ENCODE measurements at regions of chr11 and their contacts with region 1.

Region 1: DNA sequence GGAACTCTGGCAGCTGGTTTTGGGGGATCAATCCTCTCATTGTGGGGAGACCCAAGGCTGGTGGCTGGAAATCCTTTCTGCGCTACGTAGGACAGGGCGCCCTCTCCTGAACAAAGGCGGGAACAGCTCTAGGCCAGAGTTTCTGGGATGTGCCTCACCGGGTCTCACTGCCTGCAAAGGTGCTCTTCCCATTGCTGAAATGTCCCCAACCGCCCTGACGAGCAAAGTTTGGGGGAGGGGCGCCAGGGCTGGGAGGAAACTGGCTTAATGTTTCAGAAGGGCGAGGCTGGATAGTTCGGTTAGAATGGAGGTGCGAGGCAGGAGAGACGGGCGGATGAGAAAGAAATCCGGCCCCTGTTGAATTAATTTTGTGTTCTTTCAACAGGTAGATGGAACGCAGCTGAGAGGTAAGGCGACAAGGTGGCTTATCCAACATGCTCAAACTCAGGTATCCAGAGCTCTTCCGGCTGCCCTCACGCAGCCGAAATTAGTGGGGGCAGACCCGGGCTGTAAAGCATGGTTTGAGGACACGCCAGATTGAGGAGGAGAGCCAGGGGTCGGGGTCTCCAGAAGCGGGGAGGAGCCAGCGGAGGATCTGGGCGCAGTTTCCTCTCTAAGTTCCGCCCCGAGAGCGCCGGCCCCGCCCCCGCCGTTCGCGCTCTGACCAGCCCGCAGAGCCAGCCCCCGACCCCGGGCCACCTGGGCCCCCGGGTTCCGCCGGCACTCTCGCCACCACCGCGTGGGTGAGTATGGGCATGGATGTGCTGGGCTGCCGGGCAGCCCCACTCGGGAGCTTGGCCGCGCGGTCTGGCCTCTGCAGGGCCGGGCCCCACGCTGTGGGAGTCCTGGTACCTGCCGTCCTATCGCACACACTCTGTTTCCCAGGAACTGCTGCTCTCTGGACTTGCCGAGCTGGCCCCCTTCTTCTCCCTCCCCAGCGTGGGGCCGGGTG is at the start of gene PGAP2:
- DNase-seq: peak; percentile 28 to 76 (median 60)
- ATAC-seq: peak; percentile 71
- H3K4me3 ChIP-seq: peak within 1 kb of the TSS; percentile 71 to 98
- H3K4me3 Mint-ChIP-seq: peak within 1 kb of the TSS; percentile 97
- H3K27ac ChIP-seq: peak within 1 kb of the TSS; percentile 49 to 62
- H3K27ac Mint-ChIP-seq: peak within 1 kb of the TSS; percentile 91
- H3K4me1 ChIP-seq: peaks cover 5% of the 10 kb centered on the region
- H3K4me1 Mint-ChIP-seq: peaks cover 15% of the 10 kb centered on the region
- H3K27me3 ChIP-seq: no peaks in the 10 kb centered on the region
- H3K27me3 Mint-ChIP-seq: no peaks in the 10 kb centered on the region
- CTCF ChIP-seq: peak; percentile 59
- total RNA-seq, gene PGAP2: 16.3 to 18.5 TPM

Region 2: GRCh38 chr11:3642071-3642951 is 165.9 kb before region 1 on chr11:
- CTCF ChIA-PET with region 1: no interaction called
- POLR2A ChIA-PET with region 1: no interaction called
- intact Hi-C with region 1: no loop called
- DNase-seq: peak; percentile 32 to 81 (median 59)
- ATAC-seq: peak; percentile 89
- H3K4me3 ChIP-seq: peak overlapping the region; percentile 31 to 57
- H3K4me3 Mint-ChIP-seq: peak overlapping the region; percentile 71
- H3K27ac ChIP-seq: no peak overlapping the region
- H3K27ac Mint-ChIP-seq: no peak overlapping the region
- H3K4me1 ChIP-seq: peaks cover 10% of the 10 kb centered on the region
- H3K4me1 Mint-ChIP-seq: peaks cover 8% of the 10 kb centered on the region
- H3K27me3 ChIP-seq: peaks cover 2 to 3% of the 10 kb centered on the region in 2 experiments
- H3K27me3 Mint-ChIP-seq: peaks cover 53% of the 10 kb centered on the region
- CTCF ChIP-seq: no peak

Region 3: GRCh38 chr11:3709977-3710376 is 98.2 kb before region 1 on chr11:
- CTCF ChIA-PET with region 1: no interaction called
- POLR2A ChIA-PET with region 1: no interaction called
- intact Hi-C with region 1: loop called in 1 of 2 experiments (anchors 5 kb)
- DNase-seq: no peak
- ATAC-seq: no peak
- H3K4me3 ChIP-seq: no peak overlapping the region
- H3K4me3 Mint-ChIP-seq: no peak overlapping the region
- H3K27ac ChIP-seq: no peak overlapping the region
- H3K27ac Mint-ChIP-seq: no peak overlapping the region
- H3K4me1 ChIP-seq: no peaks in the 10 kb centered on the region
- H3K4me1 Mint-ChIP-seq: peaks cover 3% of the 10 kb centered on the region
- H3K27me3 ChIP-seq: no peaks in the 10 kb centered on the region
- H3K27me3 Mint-ChIP-seq: no peaks in the 10 kb centered on the region
- CTCF ChIP-seq: no peak

Region 4: GRCh38 chr11:3747684-3748083 is 60.5 kb before region 1 on chr11:
- CTCF ChIA-PET with region 1: interaction called, 4 read pairs
- POLR2A ChIA-PET with region 1: no interaction called
- intact Hi-C with region 1: loop called in 1 of 2 experiments (anchors 5 kb)
- DNase-seq: no peak
- ATAC-seq: no peak
- H3K4me3 ChIP-seq: no peak overlapping the region
- H3K4me3 Mint-ChIP-seq: no peak overlapping the region
- H3K27ac ChIP-seq: no peak overlapping the region
- H3K27ac Mint-ChIP-seq: no peak overlapping the region
- H3K4me1 ChIP-seq: no peaks in the 10 kb centered on the region
- H3K4me1 Mint-ChIP-seq: no peaks in the 10 kb centered on the region
- H3K27me3 ChIP-seq: no peaks in the 10 kb centered on the region
- H3K27me3 Mint-ChIP-seq: no peaks in the 10 kb centered on the region
- CTCF ChIP-seq: no peak

Region 5: DNA sequence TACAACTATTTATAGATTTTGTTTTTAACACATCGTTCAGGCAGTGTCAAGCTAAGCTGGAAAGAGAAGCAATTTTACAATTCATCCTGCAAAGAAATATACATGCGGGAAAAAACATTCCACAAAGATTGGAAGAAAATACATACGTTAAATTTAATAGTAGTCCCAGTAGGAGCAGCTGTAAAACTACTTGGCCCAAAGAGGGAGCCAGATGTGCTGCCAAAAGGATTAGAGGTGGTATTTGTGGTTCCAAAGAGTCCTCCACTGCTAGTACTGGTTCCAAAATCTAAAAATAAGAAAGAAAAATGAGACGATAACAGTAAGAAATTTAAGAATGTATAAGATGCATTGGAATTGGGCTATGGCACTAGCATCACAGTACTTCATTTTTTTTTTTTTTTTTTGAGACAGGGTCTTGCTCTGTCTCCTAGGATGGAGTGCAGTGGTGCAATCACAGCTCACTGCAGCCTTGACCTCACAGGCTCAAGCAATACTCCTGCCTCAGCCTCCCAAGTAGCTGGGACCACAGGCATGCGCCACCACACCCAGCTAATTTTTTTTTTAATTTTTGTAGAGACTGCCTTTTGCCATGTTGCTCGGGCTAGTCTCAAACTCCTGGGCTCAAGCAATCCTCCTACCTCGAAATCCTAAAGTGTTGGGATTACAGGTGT is 32.3 kb before region 1 on chr11:
- CTCF ChIA-PET with region 1: interaction called, 4 read pairs
- POLR2A ChIA-PET with region 1: no interaction called
- intact Hi-C with region 1: loop called in 1 of 2 experiments (anchors 5 kb)
- DNase-seq: no peak
- ATAC-seq: no peak
- H3K4me3 ChIP-seq: no peak overlapping the region
- H3K4me3 Mint-ChIP-seq: no peak overlapping the region
- H3K27ac ChIP-seq: no peak overlapping the region
- H3K27ac Mint-ChIP-seq: no peak overlapping the region
- H3K4me1 ChIP-seq: no peaks in the 10 kb centered on the region
- H3K4me1 Mint-ChIP-seq: peaks cover 6% of the 10 kb centered on the region
- H3K27me3 ChIP-seq: no peaks in the 10 kb centered on the region
- H3K27me3 Mint-ChIP-seq: no peaks in the 10 kb centered on the region
- CTCF ChIP-seq: no peak

Region 6: DNA sequence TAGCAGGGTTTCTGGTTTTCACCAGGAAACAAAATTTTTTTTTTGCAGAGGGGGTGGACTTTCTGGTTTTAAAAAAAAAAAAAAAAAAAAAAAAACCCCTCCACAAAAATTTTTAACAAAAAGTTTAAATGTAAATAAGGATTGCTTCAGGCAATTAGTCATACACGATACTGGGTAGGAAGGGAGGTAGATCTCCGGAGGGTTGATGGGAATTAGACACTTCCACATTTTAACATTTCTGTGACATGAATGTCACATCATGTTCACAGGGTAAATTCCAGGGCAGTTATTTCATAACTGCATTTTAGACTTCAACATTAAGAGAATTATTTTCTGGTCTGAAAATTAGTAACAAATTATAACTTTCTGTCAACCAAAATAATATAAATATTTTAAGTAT is 26.8 kb before region 1 on chr11:
- CTCF ChIA-PET with region 1: interaction called, 33 read pairs
- POLR2A ChIA-PET with region 1: no interaction called
- intact Hi-C with region 1: loop called (anchors 2 kb)
- DNase-seq: peak in 1 of 9 experiments; percentile 32
- ATAC-seq: no peak
- H3K4me3 ChIP-seq: no peak overlapping the region
- H3K4me3 Mint-ChIP-seq: no peak overlapping the region
- H3K27ac ChIP-seq: no peak overlapping the region
- H3K27ac Mint-ChIP-seq: no peak overlapping the region
- H3K4me1 ChIP-seq: peaks cover 34% of the 10 kb centered on the region
- H3K4me1 Mint-ChIP-seq: peaks cover 48% of the 10 kb centered on the region
- H3K27me3 ChIP-seq: no peaks in the 10 kb centered on the region
- H3K27me3 Mint-ChIP-seq: no peaks in the 10 kb centered on the region
- CTCF ChIP-seq: no peak

Region 7: GRCh38 chr11:3797329-3798095 is 10.7 kb before region 1 on chr11 and contains the start of gene NUP98:
- CTCF ChIA-PET with region 1: interaction called, 48 read pairs
- POLR2A ChIA-PET with region 1: interaction called, 30 read pairs
- intact Hi-C with region 1: loop called (anchors 1 kb)
- DNase-seq: peak; percentile 99 to 100 (median 99)
- ATAC-seq: peak; percentile 92
- H3K4me3 ChIP-seq: peak within 1 kb of the TSS; percentile 80 to 96
- H3K4me3 Mint-ChIP-seq: peak within 1 kb of the TSS; percentile 96
- H3K27ac ChIP-seq: peak within 1 kb of the TSS; percentile 94 to 99
- H3K27ac Mint-ChIP-seq: peak within 1 kb of the TSS; percentile 100
- H3K4me1 ChIP-seq: peaks cover 37% of the 10 kb centered on the region
- H3K4me1 Mint-ChIP-seq: peaks cover 47% of the 10 kb centered on the region
- H3K27me3 ChIP-seq: no peaks in the 10 kb centered on the region
- H3K27me3 Mint-ChIP-seq: no peaks in the 10 kb centered on the region
- CTCF ChIP-seq: no peak
- total RNA-seq, gene NUP98: 204 to 210 TPM

Region 8: GRCh38 chr11:3834664-3835461 is 26.7 kb after region 1 on chr11:
- CTCF ChIA-PET with region 1: interaction called, 15 read pairs
- POLR2A ChIA-PET with region 1: interaction called, 4 read pairs
- intact Hi-C with region 1: no loop called
- DNase-seq: peak in 2 of 9 experiments; percentile 29 to 34
- ATAC-seq: no peak
- H3K4me3 ChIP-seq: peak overlapping the region; percentile 7 to 26
- H3K4me3 Mint-ChIP-seq: peak overlapping the region; percentile 55
- H3K27ac ChIP-seq: peak overlapping the region in 1 of 2 experiments; percentile 61
- H3K27ac Mint-ChIP-seq: peak overlapping the region; percentile 92
- H3K4me1 ChIP-seq: peaks cover 89% of the 10 kb centered on the region
- H3K4me1 Mint-ChIP-seq: peaks cover 94% of the 10 kb centered on the region
- H3K27me3 ChIP-seq: no peaks in the 10 kb centered on the region
- H3K27me3 Mint-ChIP-seq: no peaks in the 10 kb centered on the region
- CTCF ChIP-seq: no peak

Region 9: DNA sequence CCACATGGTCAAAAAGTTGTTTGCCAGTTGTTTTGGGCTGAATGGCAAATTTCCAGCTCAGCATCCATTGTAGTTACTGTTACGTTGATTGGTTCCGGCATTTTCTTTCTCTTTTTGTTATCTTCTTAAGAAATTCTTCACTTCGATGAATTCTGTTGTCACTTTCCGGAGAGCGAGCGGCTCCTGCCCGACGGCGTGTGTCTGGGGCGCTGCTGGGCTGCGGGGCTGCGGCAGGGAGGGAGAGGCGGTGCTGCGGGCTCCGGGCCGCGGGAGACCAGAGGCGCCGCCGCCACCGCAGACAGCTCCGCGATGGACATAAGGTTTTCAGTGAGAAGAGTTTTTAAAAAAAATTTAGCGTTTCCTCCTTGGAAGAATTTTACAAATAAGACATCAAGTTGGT is 403.8 kb after region 1 on chr11:
- CTCF ChIA-PET with region 1: no interaction called
- POLR2A ChIA-PET with region 1: no interaction called
- intact Hi-C with region 1: no loop called
- DNase-seq: no peak
- ATAC-seq: no peak
- H3K4me3 ChIP-seq: no peak overlapping the region
- H3K4me3 Mint-ChIP-seq: no peak overlapping the region
- H3K27ac ChIP-seq: no peak overlapping the region
- H3K27ac Mint-ChIP-seq: no peak overlapping the region
- H3K4me1 ChIP-seq: no peaks in the 10 kb centered on the region
- H3K4me1 Mint-ChIP-seq: no peaks in the 10 kb centered on the region
- H3K27me3 ChIP-seq: no peaks in the 10 kb centered on the region
- H3K27me3 Mint-ChIP-seq: peaks cover 26% of the 10 kb centered on the region
- CTCF ChIP-seq: no peak

Measured in CD8-positive, alpha-beta T cell (primary cell).